Psoas muscle (tissue), 8 donors: ENCODE measurements at regions of chr21 and their contacts with region 1.

Region 1: DNA sequence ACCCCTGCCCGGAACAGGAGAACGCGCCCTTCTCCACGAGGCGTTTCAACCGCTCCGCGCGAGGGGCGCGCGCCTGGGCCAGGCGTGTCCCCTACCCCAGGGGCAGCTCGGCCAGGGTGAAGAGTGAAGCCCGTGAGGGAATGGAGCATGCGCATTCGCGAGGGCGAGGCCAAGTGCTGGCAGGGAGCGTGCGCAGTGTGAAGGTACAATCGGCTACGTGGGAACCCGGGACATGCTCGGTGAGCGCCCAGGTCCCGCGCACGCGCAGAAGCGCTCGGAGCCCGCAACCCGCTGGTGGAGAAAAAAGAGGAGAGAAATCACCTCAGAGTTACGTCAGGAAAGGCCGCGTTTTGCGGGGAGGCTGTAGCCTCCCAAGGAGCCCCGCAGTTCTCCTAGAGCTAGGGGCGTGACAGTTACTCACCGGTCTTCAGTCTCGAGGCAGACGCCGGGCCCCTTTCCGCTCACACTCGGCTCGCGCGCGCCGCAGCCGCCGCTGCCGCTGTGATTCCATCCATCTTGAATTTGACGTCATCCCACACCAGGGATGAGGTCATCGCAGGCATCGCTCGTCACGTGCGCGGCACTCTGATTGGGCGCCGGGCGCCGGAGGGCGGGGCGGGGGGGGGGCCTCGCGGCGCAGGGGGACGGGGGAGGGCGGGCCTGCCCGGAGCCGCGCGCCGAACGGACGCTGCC is at the start of gene ZBTB21:
- DNase-seq: peak; percentile 99
- ATAC-seq: peak; percentile 96
- H3K4me3 ChIP-seq: peak within 1 kb of the TSS; percentile 88
- H3K27ac ChIP-seq: peak within 1 kb of the TSS; percentile 99
- H3K4me1 ChIP-seq: no peaks in the 10 kb centered on the region
- H3K27me3 ChIP-seq: peaks cover 0 to 12% (median 0%) of the 10 kb centered on the region in 3 donors
- CTCF ChIP-seq: no peak
- total RNA-seq, gene ZBTB21: 4.5 to 8.8 (median 4.6) TPM

Region 2: DNA sequence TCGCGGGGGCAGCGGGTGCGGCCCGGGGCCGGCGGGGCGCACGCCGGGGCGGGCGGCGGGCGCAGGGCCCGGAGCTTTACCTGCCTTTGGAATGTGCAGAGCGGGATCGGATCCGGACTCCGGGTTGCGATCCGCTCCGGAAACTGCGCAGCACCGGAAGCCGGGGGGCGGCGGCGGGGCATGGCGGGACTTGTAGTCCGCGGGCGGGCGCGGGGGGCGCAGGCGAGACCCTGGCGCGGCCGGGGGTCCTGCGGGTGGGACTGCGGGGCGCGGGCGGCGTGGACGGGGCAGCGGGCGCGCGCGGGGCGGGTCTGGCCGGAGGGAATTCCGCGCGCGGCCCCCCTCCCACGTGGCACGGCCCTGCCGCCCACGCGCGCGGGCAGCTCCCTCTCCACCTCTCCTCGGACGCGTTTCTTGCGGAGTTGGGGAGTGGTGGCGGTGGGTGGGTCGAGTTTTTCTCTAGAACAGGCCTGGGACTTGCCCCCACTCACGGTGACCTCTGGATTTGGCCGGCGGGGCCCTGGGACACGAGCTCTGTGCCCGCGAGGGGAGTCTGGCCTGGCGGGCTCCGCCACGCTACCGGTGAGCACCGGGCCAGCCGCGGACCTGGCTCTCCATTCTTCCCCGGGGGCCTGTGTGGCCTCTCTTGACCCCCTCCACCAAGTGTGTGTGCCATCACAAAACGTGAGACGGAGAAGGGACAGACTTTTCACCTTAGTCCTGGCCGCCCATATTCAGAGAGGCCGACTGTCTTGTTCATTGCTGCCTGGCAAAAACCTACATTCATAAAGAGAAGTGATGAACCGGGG is 130.6 kb before region 1 on chr21 and contains the start of gene PRDM15:
- intact Hi-C with region 1: loop called in 1 of 2 experiments (anchors 2 kb)
- DNase-seq: peak; percentile 90 to 91
- ATAC-seq: peak; percentile 63 to 77 (median 76)
- H3K4me3 ChIP-seq: peak within 1 kb of the TSS; percentile 85
- H3K27ac ChIP-seq: peak within 1 kb of the TSS; percentile 93
- H3K4me1 ChIP-seq: peaks cover 6% of the 10 kb centered on the region
- H3K27me3 ChIP-seq: no peaks in the 10 kb centered on the region
- CTCF ChIP-seq: no peak
- total RNA-seq, gene PRDM15: 3.2 to 6.4 (median 4.4) TPM

Region 3: GRCh38 chr21:41885341-41886029 is 124.5 kb before region 1 on chr21:
- intact Hi-C with region 1: loop called in 1 of 2 experiments (anchors 5 kb)
- DNase-seq: no peak
- ATAC-seq: no peak
- H3K4me3 ChIP-seq: no peak overlapping the region
- H3K27ac ChIP-seq: no peak overlapping the region
- H3K4me1 ChIP-seq: no peaks in the 10 kb centered on the region
- H3K27me3 ChIP-seq: no peaks in the 10 kb centered on the region
- CTCF ChIP-seq: no peak